GM12878 (cell line): ENCODE measurements at regions of chr2 and their contacts with region 1.

Region 1: GRCh38 chr2:181715033-181715630 is 34.8 kb upstream of the NEUROD1 start:
- DNase-seq: peak; percentile 56
- ATAC-seq: peak; percentile 93
- H3K4me3 ChIP-seq: no peak overlapping the region
- H3K27ac ChIP-seq: no peak overlapping the region
- H3K4me1 ChIP-seq: no peaks in the 10 kb centered on the region
- H3K27me3 ChIP-seq: no peaks in the 10 kb centered on the region
- CTCF ChIP-seq: peak; percentile 55 to 85 (median 70)
- EP300 ChIP-seq: no peak
- POLR2A ChIP-seq: no peak
- RAD21 ChIP-seq: peak; percentile 96

Region 2: DNA sequence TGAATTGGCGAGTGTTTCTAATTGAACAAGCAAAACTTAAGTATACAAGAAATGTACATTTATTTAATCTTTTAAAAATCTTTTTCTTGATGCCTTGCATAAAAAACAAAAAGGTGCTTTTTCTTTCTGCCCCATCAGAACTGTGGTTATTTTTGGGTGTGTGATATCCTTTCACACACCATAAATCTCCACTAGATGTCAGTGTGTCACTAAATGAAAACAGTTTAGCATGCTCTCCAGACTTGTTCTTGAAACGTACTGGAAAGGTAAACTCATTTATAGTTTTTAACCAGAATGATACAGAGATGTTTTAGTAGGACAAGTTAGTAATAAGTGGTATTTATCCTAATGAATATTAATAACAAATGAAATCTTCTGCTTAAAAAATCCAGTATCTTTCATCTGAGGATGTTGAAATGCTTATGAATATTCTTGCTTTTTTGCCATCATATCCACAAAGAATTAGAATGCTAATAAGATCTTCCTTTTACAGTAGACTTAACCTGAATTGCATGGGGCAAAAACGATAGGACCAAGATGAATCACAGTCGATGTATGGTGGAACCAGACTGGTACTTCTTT is 637.9 kb before region 1 on chr2:
- CTCF ChIA-PET with region 1: interaction called, 8 read pairs
- POLR2A ChIA-PET with region 1: no interaction called
- RAD21 ChIA-PET with region 1: interaction called, 6 read pairs
- SMC1A ChIA-PET with region 1: interaction called, 9 read pairs
- in situ Hi-C with region 1: loop called (anchors 5 kb)
- intact Hi-C with region 1: loop called (anchors 2 kb)
- DNase-seq: peak; percentile 16
- ATAC-seq: peak; percentile 94
- H3K4me3 ChIP-seq: no peak overlapping the region
- H3K27ac ChIP-seq: no peak overlapping the region
- H3K4me1 ChIP-seq: no peaks in the 10 kb centered on the region
- H3K27me3 ChIP-seq: no peaks in the 10 kb centered on the region
- CTCF ChIP-seq: peak; percentile 60 to 71 (median 65)
- EP300 ChIP-seq: no peak
- POLR2A ChIP-seq: no peak
- RAD21 ChIP-seq: peak; percentile 93

Region 3: GRCh38 chr2:181294979-181295378 is 420.2 kb before region 1 on chr2:
- CTCF ChIA-PET with region 1: interaction called, 15 read pairs
- POLR2A ChIA-PET with region 1: no interaction called
- RAD21 ChIA-PET with region 1: no interaction called
- SMC1A ChIA-PET with region 1: interaction called, 7 read pairs
- in situ Hi-C with region 1: no loop called
- intact Hi-C with region 1: no loop called
- DNase-seq: no peak
- ATAC-seq: no peak
- H3K4me3 ChIP-seq: no peak overlapping the region
- H3K27ac ChIP-seq: no peak overlapping the region
- H3K4me1 ChIP-seq: no peaks in the 10 kb centered on the region
- H3K27me3 ChIP-seq: no peaks in the 10 kb centered on the region
- CTCF ChIP-seq: no peak
- EP300 ChIP-seq: no peak
- POLR2A ChIP-seq: no peak
- RAD21 ChIP-seq: no peak

Region 4: GRCh38 chr2:181466661-181467576 is 248.2 kb before region 1 on chr2:
- CTCF ChIA-PET with region 1: interaction called, 19 read pairs
- POLR2A ChIA-PET with region 1: no interaction called
- RAD21 ChIA-PET with region 1: interaction called, 31 read pairs
- SMC1A ChIA-PET with region 1: interaction called, 29 read pairs
- in situ Hi-C with region 1: no loop called
- intact Hi-C with region 1: loop called (anchors 5 kb)
- DNase-seq: no peak
- ATAC-seq: peak; percentile 66
- H3K4me3 ChIP-seq: no peak overlapping the region
- H3K27ac ChIP-seq: no peak overlapping the region
- H3K4me1 ChIP-seq: peaks cover 31% of the 10 kb centered on the region
- H3K27me3 ChIP-seq: no peaks in the 10 kb centered on the region
- CTCF ChIP-seq: peak; percentile 74 to 81 (median 79)
- EP300 ChIP-seq: no peak
- POLR2A ChIP-seq: no peak
- RAD21 ChIP-seq: peak; percentile 70

Region 5: GRCh38 chr2:181573140-181573736 is 141.9 kb before region 1 on chr2:
- CTCF ChIA-PET with region 1: interaction called, 359 read pairs
- POLR2A ChIA-PET with region 1: interaction called, 3 read pairs
- RAD21 ChIA-PET with region 1: interaction called, 254 read pairs
- SMC1A ChIA-PET with region 1: interaction called, 337 read pairs
- in situ Hi-C with region 1: loop called (anchors 5 kb)
- intact Hi-C with region 1: loop called (anchors 1 kb)
- DNase-seq: no peak
- ATAC-seq: no peak
- H3K4me3 ChIP-seq: no peak overlapping the region
- H3K27ac ChIP-seq: no peak overlapping the region
- H3K4me1 ChIP-seq: no peaks in the 10 kb centered on the region
- H3K27me3 ChIP-seq: peaks cover 2 to 3% of the 10 kb centered on the region in 2 experiments; a peak in 2 of 4 replicates
- CTCF ChIP-seq: peak; percentile 20 to 48 (median 37); a peak in 5 of 6 replicates
- EP300 ChIP-seq: no peak
- POLR2A ChIP-seq: no peak
- RAD21 ChIP-seq: peak; percentile 47

Region 6: GRCh38 chr2:181656450-181657291 is 58.5 kb before region 1 on chr2 and contains the start of gene CERKL:
- CTCF ChIA-PET with region 1: interaction called, 5 read pairs
- POLR2A ChIA-PET with region 1: no interaction called
- RAD21 ChIA-PET with region 1: interaction called, 3 read pairs
- SMC1A ChIA-PET with region 1: interaction called, 11 read pairs
- in situ Hi-C with region 1: no loop called
- intact Hi-C with region 1: no loop called
- DNase-seq: no peak
- ATAC-seq: peak; percentile 85
- H3K4me3 ChIP-seq: peak within 1 kb of the TSS; percentile 55
- H3K27ac ChIP-seq: no peak within 1 kb of the TSS
- H3K4me1 ChIP-seq: no peaks in the 10 kb centered on the region
- H3K27me3 ChIP-seq: peaks cover 9 to 12% of the 10 kb centered on the region in 2 experiments; a peak in 3 of 4 replicates
- CTCF ChIP-seq: no peak
- EP300 ChIP-seq: no peak
- POLR2A ChIP-seq: no peak
- RAD21 ChIP-seq: no peak
- polyA plus RNA-seq, gene CERKL: 19.1 to 23.0 TPM

Region 7: DNA sequence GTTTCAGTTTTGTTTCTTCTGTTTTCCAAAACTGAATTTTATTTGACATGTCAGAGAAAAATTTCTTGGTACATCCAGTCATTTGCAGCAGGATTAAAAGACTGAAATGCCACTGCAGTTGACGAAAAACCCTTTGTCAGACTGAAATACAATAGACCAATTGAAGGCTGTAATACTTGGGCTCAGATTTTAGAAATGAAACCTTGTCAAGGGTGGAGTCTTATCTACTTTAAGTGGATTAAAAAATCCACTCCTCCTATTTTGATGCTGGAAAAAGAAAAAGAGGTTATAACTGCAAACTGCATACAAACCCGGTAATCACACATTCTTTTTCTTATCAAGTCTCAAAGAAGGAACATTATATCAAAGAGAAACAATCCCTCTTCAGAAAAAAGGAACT is 45.4 kb after region 1 on chr2:
- CTCF ChIA-PET with region 1: no interaction called
- POLR2A ChIA-PET with region 1: no interaction called
- RAD21 ChIA-PET with region 1: no interaction called
- SMC1A ChIA-PET with region 1: no interaction called
- in situ Hi-C with region 1: no loop called
- intact Hi-C with region 1: no loop called
- DNase-seq: no peak
- ATAC-seq: no peak
- H3K4me3 ChIP-seq: no peak overlapping the region
- H3K27ac ChIP-seq: no peak overlapping the region
- H3K4me1 ChIP-seq: no peaks in the 10 kb centered on the region
- H3K27me3 ChIP-seq: no peaks in the 10 kb centered on the region; a peak in 1 of 4 replicates
- CTCF ChIP-seq: no peak
- EP300 ChIP-seq: no peak
- POLR2A ChIP-seq: no peak
- RAD21 ChIP-seq: no peak

Region 8: DNA sequence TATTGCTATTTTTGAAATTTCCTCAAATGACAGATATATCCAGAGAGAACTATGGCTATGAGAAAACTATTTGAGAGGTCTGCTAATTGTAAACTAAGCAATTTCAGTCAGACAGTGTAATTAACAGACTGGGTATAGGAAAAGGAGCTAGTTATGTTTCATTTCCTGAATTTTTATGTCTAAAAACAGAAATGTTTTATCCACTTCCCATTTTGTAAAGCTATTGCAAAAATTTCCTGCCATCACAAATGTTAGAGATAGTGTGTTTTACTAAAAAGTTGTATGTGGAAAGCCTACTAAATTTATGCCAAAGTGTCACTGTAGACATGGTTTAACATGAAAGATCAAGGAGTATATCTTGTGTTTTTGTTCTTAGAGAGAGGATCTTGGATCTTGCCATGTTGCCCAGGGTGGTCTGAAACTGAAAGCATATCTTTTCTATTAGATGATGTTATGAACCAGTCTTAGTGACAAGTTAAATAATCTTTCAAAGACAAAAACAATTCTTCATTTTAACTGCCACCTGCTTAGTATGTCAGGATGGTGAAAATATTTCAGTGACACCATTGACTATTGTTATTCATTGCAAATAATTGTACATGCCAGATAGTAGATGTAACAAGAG is 135.9 kb after region 1 on chr2:
- CTCF ChIA-PET with region 1: no interaction called
- POLR2A ChIA-PET with region 1: no interaction called
- RAD21 ChIA-PET with region 1: no interaction called
- SMC1A ChIA-PET with region 1: no interaction called
- in situ Hi-C with region 1: no loop called
- intact Hi-C with region 1: no loop called
- DNase-seq: no peak
- ATAC-seq: peak; percentile 48; the same call in 2 of the 3 replicates
- H3K4me3 ChIP-seq: no peak overlapping the region
- H3K27ac ChIP-seq: no peak overlapping the region
- H3K4me1 ChIP-seq: no peaks in the 10 kb centered on the region
- H3K27me3 ChIP-seq: no peaks in the 10 kb centered on the region
- CTCF ChIP-seq: no peak
- EP300 ChIP-seq: no peak
- POLR2A ChIP-seq: no peak
- RAD21 ChIP-seq: no peak